Cardiac septum (tissue), 1 donor: ENCODE measurements at regions of chr1 and their contacts with region 1.

Region 1: GRCh38 chr1:113140588-113141446 is 67.8 kb downstream of the LRIG2 start:
- DNase-seq: no peak

Region 2: GRCh38 chr1:113389953-113390834 is 249.4 kb after region 1 on chr1 and contains the start of gene MAGI3:
- intact Hi-C with region 1: loop called (anchors 5 kb)
- DNase-seq: peak; percentile 97
- total RNA-seq, gene MAGI3: 8.6 TPM

Region 3: GRCh38 chr1:113452921-113453770 is 312.3 kb after region 1 on chr1:
- intact Hi-C with region 1: loop called (anchors 1 kb)
- DNase-seq: no peak

Region 4: GRCh38 chr1:113617438-113618141 is 476.8 kb after region 1 on chr1:
- intact Hi-C with region 1: no loop called
- DNase-seq: no peak

Region 5: GRCh38 chr1:113677250-113678158 is 536.7 kb after region 1 on chr1:
- intact Hi-C with region 1: loop called (anchors 1 kb)
- DNase-seq: no peak

Region 6: GRCh38 chr1:113811888-113812660 is 671.3 kb after region 1 on chr1 and contains the start of gene RSBN1:
- intact Hi-C with region 1: loop called (anchors 10 kb)
- DNase-seq: peak; percentile 100
- total RNA-seq, gene RSBN1: 11.0 TPM